Right cardiac atrium (tissue), 5 donors: ENCODE measurements at regions of chr14 and their contacts with region 1.

Region 1: DNA sequence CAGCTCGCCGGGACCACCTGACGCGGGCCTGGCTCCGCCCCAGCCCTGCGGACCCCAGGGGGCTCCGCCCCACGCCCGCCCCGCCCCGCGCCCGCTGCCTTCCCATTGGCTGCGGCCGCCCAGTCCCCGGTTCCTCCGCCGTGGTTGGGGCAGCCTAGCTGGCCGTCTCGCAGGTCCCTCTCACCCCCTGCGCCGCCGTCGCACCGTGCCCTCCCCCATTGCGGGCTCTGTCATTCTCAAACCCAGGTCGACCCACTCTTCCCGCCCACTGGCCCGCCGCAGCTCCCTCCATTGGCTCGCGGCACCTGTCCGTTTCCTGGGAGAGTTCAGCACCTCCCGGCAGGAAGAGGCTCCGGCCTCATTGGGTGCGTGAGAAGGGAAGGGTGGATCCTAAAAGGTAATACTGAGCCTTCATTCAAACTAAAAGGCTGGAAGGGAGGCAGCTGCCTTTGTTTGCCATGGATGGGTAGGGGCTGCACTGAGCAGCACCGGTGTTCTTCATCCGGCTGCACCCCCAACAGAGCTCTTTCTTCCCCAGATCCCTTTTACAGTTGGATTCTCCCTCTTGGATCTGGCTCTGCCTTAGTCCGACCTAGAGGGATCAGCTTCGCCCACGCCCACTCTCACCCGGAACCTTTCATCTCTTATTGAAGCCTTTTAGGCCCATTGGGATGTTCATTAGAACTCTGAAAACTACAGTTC is 381 bp upstream of the MAP3K9 start:
- DNase-seq: peak; percentile 82 to 94 (median 93)
- ATAC-seq: peak; percentile 96 to 97
- H3K4me3 ChIP-seq: peak overlapping the region; percentile 64
- H3K27ac ChIP-seq: no peak overlapping the region
- H3K4me1 ChIP-seq: peaks cover 2% of the 10 kb centered on the region
- H3K27me3 ChIP-seq: no peaks in the 10 kb centered on the region

Region 2: DNA sequence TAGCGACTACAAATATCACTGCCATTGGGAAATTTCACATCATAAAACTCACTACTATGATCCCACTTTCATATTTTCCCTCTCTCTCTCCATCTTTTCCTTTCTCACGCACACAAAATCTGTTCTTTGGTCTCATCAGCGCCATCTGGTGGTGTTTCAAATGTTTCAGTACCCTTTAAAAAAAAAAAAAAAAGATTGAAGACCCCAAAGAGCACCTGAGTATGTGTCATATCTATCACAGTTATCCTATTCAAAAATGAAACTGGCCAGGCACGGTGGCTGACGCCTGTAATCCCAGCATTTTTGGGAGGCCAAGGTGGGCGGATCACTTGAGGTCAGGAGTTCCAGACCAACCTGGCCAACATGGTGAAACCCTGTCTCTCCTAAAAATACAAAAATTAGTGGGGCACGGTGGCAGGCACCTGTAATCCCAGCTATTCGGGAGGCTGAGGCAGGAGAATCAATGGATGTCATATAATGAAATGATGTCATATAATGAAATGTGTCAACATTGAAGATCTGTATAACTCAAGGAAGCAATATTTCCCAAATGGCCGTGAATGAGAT is 95.6 kb before region 1 on chr14:
- intact Hi-C with region 1: loop called in 1 of 4 experiments (anchors 10 kb)
- DNase-seq: no peak
- ATAC-seq: peak; percentile 12 to 34
- H3K4me3 ChIP-seq: no peak overlapping the region
- H3K27ac ChIP-seq: no peak overlapping the region
- H3K4me1 ChIP-seq: no peaks in the 10 kb centered on the region
- H3K27me3 ChIP-seq: no peaks in the 10 kb centered on the region

Region 3: DNA sequence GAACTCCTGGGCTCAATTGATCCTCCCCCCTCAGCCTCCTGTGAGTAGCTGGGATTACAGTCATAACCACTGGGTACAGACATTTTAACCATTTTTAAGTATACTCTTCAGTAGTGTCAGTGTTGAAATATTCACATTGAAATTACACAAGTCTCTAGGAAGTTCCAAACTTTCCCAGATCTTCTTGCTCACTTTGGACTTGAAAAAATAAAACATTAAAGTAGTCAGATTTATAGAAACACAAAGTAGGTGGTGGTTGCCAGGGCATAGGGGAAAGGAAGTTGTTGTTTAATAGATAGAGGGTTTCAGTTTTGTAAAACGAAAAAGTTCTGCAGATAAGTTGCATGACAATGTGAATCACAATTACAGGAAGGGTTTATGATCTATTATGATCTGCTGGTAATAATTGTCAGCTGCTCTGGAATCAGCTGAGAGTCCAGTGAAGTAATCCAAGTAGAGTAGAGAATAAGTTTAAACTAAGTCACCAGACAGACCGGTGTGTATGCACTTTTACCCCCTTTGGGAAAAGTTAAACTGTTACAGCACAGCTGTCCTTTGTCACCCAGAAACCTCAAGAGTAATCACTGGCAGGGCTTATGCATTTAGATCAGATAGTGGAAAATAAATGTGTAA is 124.9 kb after region 1 on chr14:
- intact Hi-C with region 1: no loop called
- DNase-seq: no peak
- ATAC-seq: peak; percentile 52 to 53
- H3K4me3 ChIP-seq: no peak overlapping the region
- H3K27ac ChIP-seq: no peak overlapping the region
- H3K4me1 ChIP-seq: peaks cover 4% of the 10 kb centered on the region
- H3K27me3 ChIP-seq: no peaks in the 10 kb centered on the region